A549 (cell line): ENCODE measurements at regions of chr16 and their contacts with region 1.

Region 1: GRCh38 chr16:4416200-4417032 is at the start of gene CORO7:
- DNase-seq: peak; percentile 89 to 93
- ATAC-seq: peak; percentile 86 to 96
- H3K4me3 ChIP-seq: peak within 1 kb of the TSS; percentile 83
- H3K27ac ChIP-seq: peak within 1 kb of the TSS; percentile 73 to 91
- H3K4me1 ChIP-seq: peaks cover 8% of the 10 kb centered on the region
- CTCF ChIP-seq: no peak
- EP300 ChIP-seq: no peak
- POLR2A ChIP-seq: no peak
- RAD21 ChIP-seq: no peak
- polyA plus RNA-seq, gene CORO7: 5.7 and 6.0 TPM in 2 replicates

Region 2: GRCh38 chr16:4358831-4359561 is 57.4 kb before region 1 on chr16:
- CTCF ChIA-PET with region 1: interaction called, 833 read pairs
- POLR2A ChIA-PET with region 1: no interaction called
- DNase-seq: peak; percentile 58 to 69
- ATAC-seq: peak; percentile 46 to 81; a peak in 5 of 6 replicates
- H3K4me3 ChIP-seq: no peak overlapping the region
- H3K27ac ChIP-seq: no peak overlapping the region
- H3K4me1 ChIP-seq: peaks cover 13% of the 10 kb centered on the region; the same call in 2 of the 3 replicates
- CTCF ChIP-seq: peak; percentile 85
- EP300 ChIP-seq: no peak
- POLR2A ChIP-seq: no peak
- RAD21 ChIP-seq: peak; percentile 92 to 94

Region 3: GRCh38 chr16:4371357-4372000 is 44.9 kb before region 1 on chr16 and contains the start of gene VASN:
- CTCF ChIA-PET with region 1: interaction called, 833 read pairs
- POLR2A ChIA-PET with region 1: no interaction called
- DNase-seq: peak; percentile 68 to 78
- ATAC-seq: peak; percentile 49 to 64
- H3K4me3 ChIP-seq: peak within 1 kb of the TSS; percentile 70
- H3K27ac ChIP-seq: peak within 1 kb of the TSS; percentile 74 to 94
- H3K4me1 ChIP-seq: peaks cover 61% of the 10 kb centered on the region
- CTCF ChIP-seq: no peak
- EP300 ChIP-seq: no peak
- POLR2A ChIP-seq: peak; percentile 98
- RAD21 ChIP-seq: no peak
- polyA plus RNA-seq, gene VASN: 2.0 and 2.3 TPM in 2 replicates

Region 4: GRCh38 chr16:4500272-4500671 is 83.9 kb after region 1 on chr16:
- CTCF ChIA-PET with region 1: no interaction called
- POLR2A ChIA-PET with region 1: no interaction called
- DNase-seq: peak; percentile 33 to 67
- ATAC-seq: peak; percentile 90 to 93
- H3K4me3 ChIP-seq: no peak overlapping the region
- H3K27ac ChIP-seq: peak overlapping the region in 1 of 2 experiments; percentile 44; a peak in 1 of 6 replicates
- H3K4me1 ChIP-seq: peaks cover 36% of the 10 kb centered on the region
- CTCF ChIP-seq: no peak
- EP300 ChIP-seq: no peak
- POLR2A ChIP-seq: no peak
- RAD21 ChIP-seq: no peak

Region 5: GRCh38 chr16:4511441-4512082 is 95.1 kb after region 1 on chr16:
- CTCF ChIA-PET with region 1: no interaction called
- POLR2A ChIA-PET with region 1: no interaction called
- DNase-seq: peak; percentile 71 to 80
- ATAC-seq: peak; percentile 89 to 94
- H3K4me3 ChIP-seq: no peak overlapping the region
- H3K27ac ChIP-seq: no peak overlapping the region
- H3K4me1 ChIP-seq: no peaks in the 10 kb centered on the region
- CTCF ChIP-seq: peak; percentile 49
- EP300 ChIP-seq: no peak
- POLR2A ChIP-seq: no peak
- RAD21 ChIP-seq: peak; percentile 52 to 56